ENCODE measurements at regions of chr14 and their contacts with region 1.

Region 1: GRCh38 chr14:69818757-69819191 is 21.7 kb upstream of the SLC10A1 start:
- DNase-seq: peak; percentile 83
- H3K4me3 ChIP-seq: no peak overlapping the region
- H3K27ac ChIP-seq: no peak overlapping the region
- H3K4me1 ChIP-seq: no peaks in the 10 kb centered on the region
- H3K27me3 ChIP-seq: peaks cover 4 to 14% of the 10 kb centered on the region in 2 experiments
- CTCF ChIP-seq: peak; percentile 71 to 72
- POLR2A ChIP-seq: no peak

Region 2: GRCh38 chr14:69214393-69214792 is 604.4 kb before region 1 on chr14:
- CTCF ChIA-PET with region 1: no interaction called
- POLR2A ChIA-PET with region 1: no interaction called
- dilution Hi-C with region 1: no loop called
- intact Hi-C with region 1: no loop called
- DNase-seq: no peak
- H3K4me3 ChIP-seq: no peak overlapping the region
- H3K27ac ChIP-seq: no peak overlapping the region
- H3K4me1 ChIP-seq: no peaks in the 10 kb centered on the region
- H3K27me3 ChIP-seq: no peaks in the 10 kb centered on the region
- CTCF ChIP-seq: no peak
- POLR2A ChIP-seq: no peak

Region 3: GRCh38 chr14:69586404-69586803 is 232.4 kb before region 1 on chr14:
- CTCF ChIA-PET with region 1: interaction called, 3 read pairs
- POLR2A ChIA-PET with region 1: no interaction called
- dilution Hi-C with region 1: no loop called
- intact Hi-C with region 1: loop called (anchors 5 kb)
- DNase-seq: peak; percentile 90
- H3K4me3 ChIP-seq: no peak overlapping the region
- H3K27ac ChIP-seq: no peak overlapping the region
- H3K4me1 ChIP-seq: peaks cover 20% of the 10 kb centered on the region
- H3K27me3 ChIP-seq: no peaks in the 10 kb centered on the region
- CTCF ChIP-seq: no peak
- POLR2A ChIP-seq: no peak

Region 4: DNA sequence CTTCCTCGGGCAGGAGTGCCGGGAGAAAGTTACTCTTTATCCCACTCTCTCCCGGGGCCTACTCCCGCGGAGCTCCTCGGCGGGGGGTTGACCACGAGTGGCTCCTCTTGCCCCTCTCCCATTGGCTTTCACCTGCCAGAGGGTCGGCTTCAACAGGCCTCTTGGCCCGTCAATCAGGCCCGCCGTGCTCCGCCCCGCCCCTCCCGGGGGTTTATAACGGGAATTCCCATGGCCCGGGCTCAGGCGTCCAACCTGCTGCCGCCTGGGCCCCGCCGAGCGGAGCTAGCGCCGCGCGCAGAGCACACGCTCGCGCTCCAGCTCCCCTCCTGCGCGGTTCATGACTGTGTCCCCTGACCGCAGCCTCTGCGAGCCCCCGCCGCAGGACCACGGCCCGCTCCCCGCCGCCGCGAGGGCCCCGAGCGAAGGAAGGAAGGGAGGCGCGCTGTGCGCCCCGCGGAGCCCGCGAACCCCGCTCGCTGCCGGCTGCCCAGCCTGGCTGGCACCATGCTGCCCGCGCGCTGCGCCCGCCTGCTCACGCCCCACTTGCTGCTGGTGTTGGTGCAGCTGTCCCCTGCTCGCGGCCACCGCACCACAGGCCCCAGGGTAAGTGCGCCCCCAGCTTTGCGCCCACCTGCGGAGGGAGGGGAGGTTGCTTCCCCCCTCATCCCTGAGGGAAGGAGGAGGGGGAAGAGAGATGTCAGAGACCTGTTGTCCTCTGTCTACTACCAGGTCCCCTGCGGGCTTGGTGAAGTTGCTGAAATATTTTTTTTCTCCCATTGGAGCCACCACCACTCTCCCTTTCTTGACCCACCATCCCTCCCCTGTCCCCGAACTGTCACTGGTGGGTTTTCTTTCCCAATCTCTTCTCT is 60.6 kb after region 1 on chr14 and contains the start of gene SMOC1:
- CTCF ChIA-PET with region 1: interaction called, 7 read pairs
- POLR2A ChIA-PET with region 1: no interaction called
- dilution Hi-C with region 1: no loop called
- intact Hi-C with region 1: loop called (anchors 2 kb)
- DNase-seq: peak; percentile 57
- H3K4me3 ChIP-seq: peak within 1 kb of the TSS in 1 of 3 experiments; percentile 12
- H3K27ac ChIP-seq: no peak within 1 kb of the TSS
- H3K4me1 ChIP-seq: no peaks in the 10 kb centered on the region
- H3K27me3 ChIP-seq: peaks cover 34% of the 10 kb centered on the region in 2 experiments
- CTCF ChIP-seq: no peak
- POLR2A ChIP-seq: no peak
- total RNA-seq, gene SMOC1: 0.78 and 0.97 TPM in 2 replicates

Region 5: DNA sequence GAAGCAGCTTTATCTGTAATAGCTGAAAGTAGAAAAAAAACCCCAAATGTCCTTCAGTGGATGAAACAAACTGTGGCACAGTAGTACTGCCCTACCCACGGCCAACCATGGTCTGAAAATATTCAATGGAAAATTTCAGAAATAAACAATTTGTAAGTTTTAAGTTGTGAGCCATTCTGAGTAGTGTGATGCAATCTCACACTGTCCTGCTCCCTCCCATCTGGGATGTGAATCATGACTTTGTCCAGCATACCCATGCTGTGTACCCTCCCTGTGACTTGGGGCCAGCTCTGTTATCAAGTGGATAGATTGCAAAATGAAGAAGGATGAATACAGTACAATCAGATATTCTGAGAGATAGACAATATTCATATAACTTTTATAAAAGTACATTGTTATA is 166.7 kb after region 1 on chr14:
- CTCF ChIA-PET with region 1: no interaction called
- POLR2A ChIA-PET with region 1: no interaction called
- dilution Hi-C with region 1: no loop called
- intact Hi-C with region 1: no loop called
- DNase-seq: no peak
- H3K4me3 ChIP-seq: no peak overlapping the region
- H3K27ac ChIP-seq: no peak overlapping the region
- H3K4me1 ChIP-seq: no peaks in the 10 kb centered on the region
- H3K27me3 ChIP-seq: peaks cover 0 to 1% of the 10 kb centered on the region in 2 experiments
- CTCF ChIP-seq: no peak
- POLR2A ChIP-seq: no peak

Region 6: DNA sequence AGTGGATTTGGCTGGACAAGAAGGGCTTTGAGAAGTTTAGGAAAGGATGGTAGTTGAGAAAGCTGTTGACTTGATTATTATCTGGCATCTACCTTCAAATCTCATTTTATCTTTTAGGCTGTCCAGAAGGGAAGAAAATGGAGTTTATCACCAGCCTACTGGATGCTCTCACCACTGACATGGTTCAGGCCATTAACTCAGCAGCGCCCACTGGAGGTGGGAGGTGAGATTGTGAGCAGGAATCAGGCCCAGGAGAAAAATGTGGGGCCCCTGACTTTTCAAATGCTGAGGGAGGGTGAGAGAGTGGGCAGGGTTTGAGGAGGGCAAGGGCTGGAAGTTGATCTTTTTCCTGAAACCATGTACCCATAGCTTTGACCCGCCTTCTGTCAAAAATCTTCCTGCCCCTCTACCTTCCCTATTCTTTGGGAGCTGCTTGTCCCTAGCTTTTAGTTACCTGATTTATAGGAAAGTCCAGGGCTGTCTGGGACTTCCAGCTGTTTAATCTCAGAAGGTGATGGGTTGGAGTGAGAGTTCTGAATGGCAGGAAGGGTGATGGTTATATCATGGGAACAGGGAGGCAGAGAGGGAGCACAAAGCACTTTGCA is 194.6 kb after region 1 on chr14:
- CTCF ChIA-PET with region 1: interaction called, 9 read pairs
- POLR2A ChIA-PET with region 1: no interaction called
- dilution Hi-C with region 1: no loop called
- intact Hi-C with region 1: loop called (anchors 1 kb)
- DNase-seq: peak; percentile 34
- H3K4me3 ChIP-seq: no peak overlapping the region
- H3K27ac ChIP-seq: no peak overlapping the region
- H3K4me1 ChIP-seq: no peaks in the 10 kb centered on the region
- H3K27me3 ChIP-seq: no peaks in the 10 kb centered on the region
- CTCF ChIP-seq: peak; percentile 78 to 80
- POLR2A ChIP-seq: no peak

Region 7: GRCh38 chr14:70073924-70074566 is 255.3 kb after region 1 on chr14:
- CTCF ChIA-PET with region 1: interaction called, 61 read pairs
- POLR2A ChIA-PET with region 1: no interaction called
- dilution Hi-C with region 1: no loop called
- intact Hi-C with region 1: loop called (anchors 1 kb)
- DNase-seq: peak; percentile 35
- H3K4me3 ChIP-seq: no peak overlapping the region
- H3K27ac ChIP-seq: no peak overlapping the region
- H3K4me1 ChIP-seq: no peaks in the 10 kb centered on the region
- H3K27me3 ChIP-seq: no peaks in the 10 kb centered on the region
- CTCF ChIP-seq: peak; percentile 71 to 83
- POLR2A ChIP-seq: no peak

Region 8: DNA sequence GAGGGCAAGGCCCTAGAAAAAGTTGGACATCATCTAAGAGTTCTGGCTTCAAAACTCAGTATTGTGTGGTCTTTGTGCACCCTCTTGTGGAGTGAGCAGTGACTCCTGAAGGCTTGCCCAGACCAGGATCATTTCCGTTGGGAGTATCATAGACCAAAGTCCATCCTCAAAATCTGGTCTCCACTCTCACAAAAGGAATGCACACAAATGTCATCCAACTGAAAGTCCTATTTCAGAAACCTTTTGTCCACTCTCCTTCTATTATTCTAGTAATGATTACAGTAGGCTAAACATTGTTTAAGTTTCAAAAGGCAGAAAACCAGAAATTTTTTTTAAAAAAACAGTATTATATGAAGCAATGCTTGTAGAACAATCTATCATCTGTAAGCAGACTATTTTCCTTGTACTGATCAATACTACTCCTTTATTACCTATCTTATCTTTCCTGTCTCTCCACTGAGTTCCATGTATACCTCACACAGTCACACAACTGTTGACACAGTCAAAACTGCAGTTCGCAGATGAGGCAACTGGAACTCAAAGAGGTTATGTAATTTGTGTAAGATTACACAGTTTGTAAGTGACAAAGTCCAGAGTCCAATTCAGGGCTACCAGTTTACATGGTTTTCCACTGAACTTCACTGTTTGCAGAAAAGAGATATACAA is 499.3 kb after region 1 on chr14:
- CTCF ChIA-PET with region 1: interaction called, 6 read pairs
- POLR2A ChIA-PET with region 1: no interaction called
- dilution Hi-C with region 1: no loop called
- intact Hi-C with region 1: loop called (anchors 5 kb)
- DNase-seq: peak; percentile 35
- H3K4me3 ChIP-seq: no peak overlapping the region
- H3K27ac ChIP-seq: no peak overlapping the region
- H3K4me1 ChIP-seq: no peaks in the 10 kb centered on the region
- H3K27me3 ChIP-seq: peaks cover 0 to 2% of the 10 kb centered on the region in 2 experiments
- CTCF ChIP-seq: peak; percentile 15 to 44
- POLR2A ChIP-seq: no peak